ENCODE measurements at regions of chr17 and their contacts with region 1.

Region 1: GRCh38 chr17:72539981-72540897 is 419.4 kb downstream of the SOX9 start:
- DNase-seq: peak; percentile 66
- ATAC-seq: peak; percentile 99
- H3K4me3 ChIP-seq: peak overlapping the region in 1 of 3 experiments; percentile 45; a peak in 3 of 6 replicates
- H3K27ac ChIP-seq: peak overlapping the region; percentile 30
- H3K4me1 ChIP-seq: peaks cover 80% of the 10 kb centered on the region
- H3K27me3 ChIP-seq: no peaks in the 10 kb centered on the region
- CTCF ChIP-seq: peak; percentile 93
- EP300 ChIP-seq: peak in 1 of 2 experiments; percentile 58; a peak in 2 of 4 replicates
- POLR2A ChIP-seq: no peak
- RAD21 ChIP-seq: peak; percentile 100

Region 2: DNA sequence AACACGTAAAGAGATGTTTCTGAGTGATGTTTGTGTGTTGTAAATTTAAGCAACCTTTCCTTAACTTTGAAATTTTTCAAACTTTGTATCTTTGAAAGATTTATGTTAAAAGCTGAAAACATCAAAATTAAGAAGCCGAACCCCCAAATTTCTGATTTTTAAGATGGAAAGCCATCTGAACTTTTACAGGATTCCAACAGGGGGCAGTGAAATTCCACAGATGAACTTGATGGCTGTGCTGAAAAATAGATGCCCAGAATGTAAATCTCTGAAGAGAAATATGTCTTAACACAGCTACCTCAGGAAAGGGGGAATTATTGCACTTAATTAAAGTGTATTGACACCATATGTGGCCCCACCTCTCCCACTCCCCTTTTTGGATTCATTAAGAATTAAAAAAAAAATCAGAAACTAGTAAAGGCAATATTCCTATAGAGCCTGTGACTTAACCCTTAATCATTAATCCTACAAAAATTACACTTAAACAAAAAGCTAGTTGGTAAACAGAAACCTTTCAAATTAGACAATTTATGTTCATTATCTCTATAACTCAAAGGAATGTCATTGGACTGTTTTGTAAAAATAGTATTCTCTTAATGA is 1773.0 kb before region 1 on chr17:
- CTCF ChIA-PET with region 1: no interaction called
- POLR2A ChIA-PET with region 1: no interaction called
- in situ Hi-C with region 1: loop called (anchors 10 kb)
- intact Hi-C with region 1: loop called (anchors 2 kb)
- DNase-seq: peak; percentile 31
- ATAC-seq: no peak
- H3K4me3 ChIP-seq: no peak overlapping the region
- H3K27ac ChIP-seq: no peak overlapping the region
- H3K4me1 ChIP-seq: no peaks in the 10 kb centered on the region
- H3K27me3 ChIP-seq: no peaks in the 10 kb centered on the region
- CTCF ChIP-seq: peak; percentile 61
- EP300 ChIP-seq: no peak
- POLR2A ChIP-seq: no peak
- RAD21 ChIP-seq: 0 out of 2 replicates have a peak, but pooled peaks have one; percentile 24

Region 3: DNA sequence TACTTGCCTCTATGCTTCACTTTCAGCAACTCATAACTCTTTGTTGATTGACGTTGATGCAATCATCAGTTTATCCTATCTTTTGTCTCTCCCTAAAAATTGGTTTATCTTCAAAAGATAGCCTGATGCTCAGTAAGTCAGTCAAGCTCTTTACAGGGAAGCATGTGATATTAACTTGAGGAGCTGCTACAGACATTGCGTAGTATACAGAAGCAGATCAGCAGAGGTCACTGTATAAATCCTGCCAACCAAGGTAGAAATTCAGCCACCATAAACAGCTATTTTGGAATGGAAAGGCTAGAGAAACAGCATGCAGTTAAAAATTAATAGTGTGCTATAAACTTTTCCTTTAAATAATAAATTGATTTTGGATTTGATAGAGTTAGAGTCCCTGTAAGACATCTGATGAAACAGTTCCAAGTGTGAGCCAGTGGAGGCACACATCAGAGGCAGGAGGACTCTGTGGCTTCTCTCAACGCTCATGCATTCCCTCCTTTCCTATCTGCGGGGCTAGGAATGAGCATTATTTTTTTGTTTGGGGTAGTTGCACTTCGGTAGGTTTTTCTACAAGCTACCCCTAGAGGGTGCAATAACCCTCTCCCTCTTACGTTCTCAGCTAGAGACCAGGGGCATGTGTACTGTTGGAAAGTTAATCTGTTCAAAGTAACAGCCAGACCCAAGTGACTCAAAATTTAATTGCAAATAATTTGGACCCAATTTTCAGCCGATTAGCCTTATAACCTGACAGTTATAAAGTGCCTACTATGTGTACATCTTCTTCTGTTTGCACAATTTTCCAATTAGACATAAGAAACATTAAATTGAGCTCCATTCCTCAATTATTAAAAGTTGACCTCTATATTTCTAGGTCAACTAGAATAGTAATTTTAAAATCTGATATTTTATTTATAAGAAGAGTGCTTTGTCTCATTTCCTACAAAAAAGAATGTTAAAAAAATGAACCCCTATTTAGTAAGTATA is 1067.1 kb before region 1 on chr17:
- CTCF ChIA-PET with region 1: interaction called, 10 read pairs
- POLR2A ChIA-PET with region 1: no interaction called
- in situ Hi-C with region 1: loop called (anchors 25 kb)
- intact Hi-C with region 1: loop called (anchors 1 kb)
- DNase-seq: peak; percentile 65
- ATAC-seq: peak; percentile 93
- H3K4me3 ChIP-seq: no peak overlapping the region
- H3K27ac ChIP-seq: no peak overlapping the region
- H3K4me1 ChIP-seq: no peaks in the 10 kb centered on the region
- H3K27me3 ChIP-seq: no peaks in the 10 kb centered on the region
- CTCF ChIP-seq: peak; percentile 80
- EP300 ChIP-seq: no peak
- POLR2A ChIP-seq: no peak
- RAD21 ChIP-seq: peak; percentile 80

Region 4: DNA sequence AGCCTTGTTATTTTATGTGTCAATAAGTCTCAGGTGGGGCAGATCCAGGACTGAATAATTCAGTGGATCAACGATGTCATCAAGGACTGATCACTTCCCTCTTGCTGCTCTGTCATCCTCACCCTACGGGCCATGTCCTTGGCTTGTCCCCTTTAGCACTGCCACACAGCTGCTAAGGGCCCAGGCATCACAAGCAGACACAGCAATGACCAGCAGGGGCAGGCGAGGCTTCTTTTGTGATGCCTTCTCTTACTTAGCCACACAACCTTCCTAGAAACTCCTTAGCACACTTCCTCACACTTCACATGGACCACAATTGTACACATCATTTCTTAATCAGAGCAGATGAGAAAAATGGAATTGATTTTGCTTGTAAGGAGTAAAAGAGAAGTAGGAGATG is 775.7 kb before region 1 on chr17:
- CTCF ChIA-PET with region 1: no interaction called
- POLR2A ChIA-PET with region 1: no interaction called
- in situ Hi-C with region 1: loop called (anchors 25 kb)
- intact Hi-C with region 1: no loop called
- DNase-seq: peak; percentile 25
- ATAC-seq: peak; percentile 97
- H3K4me3 ChIP-seq: no peak overlapping the region
- H3K27ac ChIP-seq: no peak overlapping the region
- H3K4me1 ChIP-seq: no peaks in the 10 kb centered on the region
- H3K27me3 ChIP-seq: no peaks in the 10 kb centered on the region
- CTCF ChIP-seq: peak; percentile 53
- EP300 ChIP-seq: no peak
- POLR2A ChIP-seq: no peak
- RAD21 ChIP-seq: 0 out of 2 replicates have a peak, but pooled peaks have one; percentile 27

Region 5: DNA sequence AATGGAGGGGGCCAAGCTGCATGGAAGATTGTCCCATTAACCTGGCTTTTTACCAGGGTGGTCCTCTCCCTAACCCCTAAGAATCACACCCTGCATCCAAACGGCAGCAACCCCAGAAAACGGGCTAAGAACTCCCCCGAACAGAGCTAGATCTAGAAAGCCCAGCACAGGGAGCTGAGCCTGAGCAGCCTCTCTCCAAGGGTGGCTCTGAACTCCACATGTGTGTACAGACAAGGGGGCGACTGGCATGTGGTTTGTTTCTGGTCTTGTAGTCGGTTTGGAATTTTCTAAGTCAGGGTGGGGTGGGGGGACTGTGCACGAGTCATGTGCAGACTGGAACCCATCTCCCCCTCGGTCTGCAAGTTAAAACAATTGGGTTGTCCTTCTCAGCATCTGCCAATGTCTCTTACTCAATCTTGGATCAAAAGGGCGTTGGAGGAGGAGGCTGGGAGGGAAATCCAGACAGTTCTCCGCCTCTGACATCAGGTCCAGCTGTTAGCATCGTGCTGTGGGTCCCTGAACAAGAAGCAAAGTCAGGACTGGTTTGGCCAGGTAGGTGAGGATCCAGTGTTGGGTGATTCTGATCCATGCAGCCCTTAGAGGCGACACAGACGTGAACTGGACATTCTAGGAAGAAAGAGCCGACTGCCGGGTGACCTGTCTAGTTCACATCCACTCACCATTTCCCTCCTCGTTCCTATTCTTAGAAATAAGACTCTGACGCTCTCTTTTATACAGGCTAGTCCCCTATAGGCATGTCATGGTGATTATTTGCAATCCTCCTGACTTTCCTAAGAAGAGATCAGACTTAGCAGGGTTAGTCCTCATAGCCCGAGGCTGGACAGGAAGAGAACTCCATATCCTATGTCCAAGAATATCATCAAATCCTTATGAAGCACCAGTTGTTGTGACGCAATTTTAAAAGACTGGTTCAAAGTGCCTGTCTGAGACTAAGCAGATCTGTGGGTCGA is 37.6 kb before region 1 on chr17:
- CTCF ChIA-PET with region 1: no interaction called
- POLR2A ChIA-PET with region 1: interaction called, 10 read pairs
- in situ Hi-C with region 1: no loop called
- intact Hi-C with region 1: no loop called
- DNase-seq: peak; percentile 93
- ATAC-seq: peak; percentile 82
- H3K4me3 ChIP-seq: peak overlapping the region; percentile 60 to 78 (median 60)
- H3K27ac ChIP-seq: peak overlapping the region; percentile 78
- H3K4me1 ChIP-seq: peaks cover 58% of the 10 kb centered on the region
- H3K27me3 ChIP-seq: no peaks in the 10 kb centered on the region
- CTCF ChIP-seq: 0 out of 2 replicates have a peak, but pooled peaks have one; percentile 1
- EP300 ChIP-seq: peak in 1 of 2 experiments; percentile 91; a peak in 2 of 4 replicates
- POLR2A ChIP-seq: no peak
- RAD21 ChIP-seq: no peak

Region 6: GRCh38 chr17:72592242-72592966 is 52.2 kb after region 1 on chr17:
- CTCF ChIA-PET with region 1: no interaction called
- POLR2A ChIA-PET with region 1: no interaction called
- in situ Hi-C with region 1: no loop called
- intact Hi-C with region 1: no loop called
- DNase-seq: peak; percentile 78
- ATAC-seq: peak; percentile 87
- H3K4me3 ChIP-seq: peak overlapping the region; percentile 93 to 99 (median 98)
- H3K27ac ChIP-seq: peak overlapping the region; percentile 58
- H3K4me1 ChIP-seq: peaks cover 39% of the 10 kb centered on the region
- H3K27me3 ChIP-seq: no peaks in the 10 kb centered on the region; a peak in 1 of 5 replicates
- CTCF ChIP-seq: peak; percentile 55
- EP300 ChIP-seq: peak; percentile 42 to 52; a peak in 2 of 4 replicates
- POLR2A ChIP-seq: peak; percentile 100
- RAD21 ChIP-seq: peak; percentile 83

Region 7: DNA sequence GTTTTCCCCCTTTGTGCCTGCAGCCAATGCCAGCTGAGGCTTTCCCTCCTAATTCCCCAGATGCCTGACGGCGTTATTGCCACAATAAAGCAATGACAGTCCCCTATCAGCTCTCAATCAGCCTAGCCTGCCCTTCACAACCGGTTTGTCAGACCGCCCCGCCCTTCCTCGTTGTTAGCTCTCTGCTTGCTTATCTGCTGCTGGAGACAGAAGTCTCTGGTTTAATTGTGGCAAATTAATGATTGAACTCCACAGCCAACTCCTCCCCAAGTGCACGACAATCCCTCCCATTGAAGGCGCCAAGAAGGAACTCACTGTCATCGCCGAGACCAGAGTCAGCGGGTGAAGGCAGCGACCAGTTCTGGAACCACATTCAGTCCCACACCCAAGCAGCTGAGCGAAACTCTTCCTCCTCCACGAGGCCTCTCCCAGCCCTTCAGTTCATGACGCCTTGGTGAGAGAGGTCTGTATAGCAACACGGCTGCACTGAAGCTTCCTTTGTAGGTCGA is 77.8 kb after region 1 on chr17:
- CTCF ChIA-PET with region 1: no interaction called
- POLR2A ChIA-PET with region 1: no interaction called
- in situ Hi-C with region 1: no loop called
- intact Hi-C with region 1: no loop called
- DNase-seq: peak; percentile 92
- ATAC-seq: peak; percentile 70
- H3K4me3 ChIP-seq: peak overlapping the region; percentile 33 to 64 (median 40); a peak in 5 of 6 replicates
- H3K27ac ChIP-seq: no peak overlapping the region
- H3K4me1 ChIP-seq: peaks cover 71% of the 10 kb centered on the region
- H3K27me3 ChIP-seq: no peaks in the 10 kb centered on the region
- CTCF ChIP-seq: no peak
- EP300 ChIP-seq: peak in 1 of 2 experiments; percentile 65; a peak in 2 of 4 replicates
- POLR2A ChIP-seq: peak in 1 of 2 experiments; percentile 20; a peak in 1 of 4 replicates
- RAD21 ChIP-seq: no peak

Region 8: DNA sequence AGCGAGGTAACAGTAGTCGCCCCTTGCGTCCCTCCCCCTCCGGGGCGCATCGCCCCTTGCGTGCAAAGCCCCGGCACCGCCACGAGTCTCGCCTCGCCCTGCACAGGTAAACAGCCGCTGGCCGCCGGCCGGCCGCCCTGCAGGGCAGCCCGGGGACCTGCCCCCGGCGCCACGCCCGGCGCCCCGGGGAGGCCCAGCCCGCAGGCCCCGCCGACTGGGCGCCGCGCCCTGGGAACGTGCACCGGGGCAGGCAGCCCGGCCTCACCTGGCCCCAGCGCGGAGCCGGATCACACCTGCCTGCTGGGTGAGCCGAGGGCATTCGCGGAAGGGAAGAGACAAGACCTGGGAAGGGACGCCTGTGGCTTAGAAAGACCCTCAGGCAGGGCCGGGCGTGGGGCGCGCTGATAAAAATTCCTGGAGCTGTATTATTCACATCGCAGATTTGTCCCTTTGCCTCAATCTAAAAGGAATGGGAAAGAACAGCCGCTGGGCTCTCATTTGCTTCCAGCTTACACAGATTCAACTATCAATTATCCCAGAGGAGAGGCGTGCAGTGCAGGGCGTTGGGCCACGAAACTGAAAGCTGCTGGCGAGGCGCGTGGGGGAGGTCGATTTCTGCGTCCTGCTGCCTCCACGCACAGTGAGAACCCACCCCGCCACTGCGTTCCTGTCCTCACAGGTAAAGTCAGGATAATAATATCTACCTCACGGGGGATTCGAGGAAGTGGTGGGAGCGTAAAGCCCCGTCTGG is 100.4 kb after region 1 on chr17:
- CTCF ChIA-PET with region 1: no interaction called
- POLR2A ChIA-PET with region 1: no interaction called
- in situ Hi-C with region 1: no loop called
- intact Hi-C with region 1: no loop called
- DNase-seq: no peak
- ATAC-seq: no peak
- H3K4me3 ChIP-seq: no peak overlapping the region
- H3K27ac ChIP-seq: no peak overlapping the region
- H3K4me1 ChIP-seq: peaks cover 28% of the 10 kb centered on the region
- H3K27me3 ChIP-seq: no peaks in the 10 kb centered on the region
- CTCF ChIP-seq: no peak
- EP300 ChIP-seq: no peak
- POLR2A ChIP-seq: no peak
- RAD21 ChIP-seq: no peak

Measured in HepG2 (cell line).